Mammary epithelial cell (primary cell): ENCODE measurements at regions of chr9 and their contacts with region 1.

Region 1: DNA sequence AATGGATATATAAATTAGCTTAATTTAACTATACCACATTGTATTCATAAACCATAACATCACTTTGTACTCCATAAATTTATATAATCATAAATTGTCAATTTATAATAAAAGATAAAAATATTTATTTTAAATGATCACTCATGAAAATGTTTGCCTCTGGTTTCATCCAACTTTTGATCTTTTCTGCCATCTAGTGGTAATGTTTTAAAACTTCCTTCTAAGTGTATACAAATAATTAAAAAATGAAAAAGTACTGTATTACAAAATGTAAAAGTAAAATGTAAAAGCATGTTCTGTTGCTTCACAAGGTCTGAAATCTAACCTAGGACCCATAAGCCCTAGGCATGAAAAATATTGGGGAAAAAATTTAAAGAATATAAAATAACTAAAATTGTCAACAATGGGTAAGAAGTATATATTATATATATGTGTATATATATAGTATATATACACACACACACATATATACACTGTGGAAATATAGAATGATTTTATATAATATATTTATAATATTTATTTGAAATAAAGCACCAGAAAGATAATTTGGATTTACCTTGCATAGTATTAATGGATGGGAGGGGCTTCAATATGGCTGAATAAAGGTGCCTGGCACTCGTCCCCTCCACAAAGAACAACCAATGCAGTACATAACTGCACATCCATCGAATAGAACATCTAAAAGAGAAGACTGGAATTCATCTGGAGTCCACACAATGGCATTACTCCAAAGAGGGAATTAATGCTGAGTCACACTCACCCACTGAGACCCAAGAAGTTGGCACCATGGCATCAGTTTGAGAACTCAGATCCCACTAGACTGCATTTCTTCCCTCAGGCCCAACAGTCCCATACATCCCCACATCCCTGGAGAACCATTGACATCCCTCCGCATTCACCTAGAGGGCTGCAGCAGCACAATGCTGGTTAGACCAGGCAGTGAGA is 32.5 kb downstream of the ANXA1 start:
- DNase-seq: no peak
- H3K4me3 ChIP-seq: no peak overlapping the region
- H3K27ac ChIP-seq: no peak overlapping the region
- H3K4me1 ChIP-seq: peaks cover 5% of the 10 kb centered on the region
- H3K27me3 ChIP-seq: peaks cover 3% of the 10 kb centered on the region
- CTCF ChIP-seq: peak; percentile 27 to 42

Region 2: GRCh38 chr9:72856972-72857623 is 327.1 kb before region 1 on chr9:
- CTCF ChIA-PET with region 1: no interaction called
- dilution Hi-C with region 1: loop called (anchors 5 kb)
- in situ Hi-C with region 1: loop called (anchors 10 kb)
- intact Hi-C with region 1: no loop called
- DNase-seq: peak; percentile 49
- H3K4me3 ChIP-seq: no peak overlapping the region
- H3K27ac ChIP-seq: no peak overlapping the region
- H3K4me1 ChIP-seq: no peaks in the 10 kb centered on the region
- H3K27me3 ChIP-seq: no peaks in the 10 kb centered on the region
- CTCF ChIP-seq: peak; percentile 59 to 63

Region 3: GRCh38 chr9:72871685-72872084 is 312.5 kb before region 1 on chr9:
- CTCF ChIA-PET with region 1: no interaction called
- dilution Hi-C with region 1: no loop called
- in situ Hi-C with region 1: loop called in 1 of 2 experiments (anchors 10 kb)
- intact Hi-C with region 1: loop called (anchors 2 kb)
- DNase-seq: peak; percentile 21
- H3K4me3 ChIP-seq: no peak overlapping the region
- H3K27ac ChIP-seq: no peak overlapping the region
- H3K4me1 ChIP-seq: no peaks in the 10 kb centered on the region
- H3K27me3 ChIP-seq: no peaks in the 10 kb centered on the region
- CTCF ChIP-seq: peak; percentile 19 to 52

Region 4: GRCh38 chr9:73081979-73082657 is 102.1 kb before region 1 on chr9:
- CTCF ChIA-PET with region 1: no interaction called
- dilution Hi-C with region 1: no loop called
- in situ Hi-C with region 1: no loop called
- intact Hi-C with region 1: loop called (anchors 1 kb)
- DNase-seq: peak; percentile 24
- H3K4me3 ChIP-seq: no peak overlapping the region
- H3K27ac ChIP-seq: no peak overlapping the region
- H3K4me1 ChIP-seq: no peaks in the 10 kb centered on the region
- H3K27me3 ChIP-seq: peaks cover 4% of the 10 kb centered on the region
- CTCF ChIP-seq: peak; percentile 74 to 83

Region 5: DNA sequence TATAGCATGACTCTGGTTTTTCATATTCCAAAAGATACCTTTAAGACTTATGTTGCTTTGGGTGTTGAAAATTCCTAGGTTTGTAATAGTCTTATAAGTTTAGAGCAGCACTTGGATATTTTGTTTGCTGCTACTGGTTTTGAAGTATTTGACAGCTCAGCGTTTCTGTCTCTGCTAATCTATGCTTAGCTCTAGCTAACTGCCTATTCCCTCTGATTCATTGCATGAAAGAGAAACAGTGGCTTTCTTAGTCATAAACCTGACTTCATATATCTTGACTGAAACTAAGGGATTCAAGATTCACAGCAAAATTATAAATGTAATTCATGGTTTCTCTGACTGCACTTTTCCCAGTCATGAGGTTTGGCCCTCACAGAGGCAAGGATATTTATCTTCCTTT is 68.2 kb before region 1 on chr9:
- CTCF ChIA-PET with region 1: interaction called, 5 read pairs
- dilution Hi-C with region 1: loop called (anchors 5 kb)
- in situ Hi-C with region 1: no loop called
- intact Hi-C with region 1: no loop called
- DNase-seq: peak; percentile 90
- H3K4me3 ChIP-seq: no peak overlapping the region
- H3K27ac ChIP-seq: peak overlapping the region; percentile 69
- H3K4me1 ChIP-seq: peaks cover 17% of the 10 kb centered on the region
- H3K27me3 ChIP-seq: no peaks in the 10 kb centered on the region
- CTCF ChIP-seq: no peak